Activated T-helper 2 cell treated with anti-CD3 and anti-CD28 coated beads, Interferon-gamma antibody, Interleukin-2, Interleukin-4, amounts not matched to agents 10 μg/mL and 5 μg/mL and 100 μg/mL, durations not matched to agents 14 hours and 24 hours and 36 hours (primary cell): ENCODE measurements at regions of chr14 and their contacts with region 1.

Region 1: DNA sequence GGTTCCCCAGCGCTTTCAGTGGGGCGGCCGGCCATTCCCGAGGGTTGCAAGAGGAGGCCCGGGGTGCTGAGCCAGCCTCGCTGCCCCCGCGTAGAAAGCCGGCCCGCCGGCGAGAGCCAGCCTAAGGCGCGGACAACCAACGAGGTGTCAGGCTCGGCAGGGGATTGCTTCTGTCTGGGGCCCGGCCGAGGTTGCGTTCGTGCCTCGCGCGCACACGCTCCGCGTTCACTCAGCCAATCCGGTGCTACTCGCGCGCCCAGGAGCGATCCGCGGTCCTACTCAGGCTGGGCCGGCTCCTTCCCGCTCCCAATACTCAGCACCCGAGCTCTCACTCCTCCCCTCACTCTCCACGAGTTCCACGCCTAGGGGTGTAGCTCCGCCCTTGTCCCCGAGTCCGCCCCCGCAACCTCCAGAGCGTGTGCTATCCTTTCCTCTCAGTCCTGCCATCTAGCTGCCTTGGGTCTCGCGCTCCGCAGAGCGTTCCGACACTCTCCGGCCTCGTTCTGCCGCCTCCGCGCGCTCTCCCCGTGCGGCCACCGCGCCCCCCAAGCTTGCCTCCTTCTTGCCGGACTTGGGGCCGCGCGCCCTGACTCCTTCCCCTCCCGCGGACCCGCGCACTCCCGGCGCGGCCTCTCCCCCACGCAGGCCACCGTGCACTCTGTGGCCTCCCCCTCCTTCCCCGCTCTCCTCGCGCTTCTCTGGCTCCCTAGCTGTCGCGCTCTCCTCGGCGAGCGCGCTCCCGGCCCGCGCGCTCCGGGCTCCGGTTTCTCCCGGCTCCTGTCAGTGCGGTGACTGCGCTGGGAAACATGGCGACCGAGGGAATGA is at the start of gene GPHN:
- DNase-seq: peak; percentile 90
- H3K4me3 Mint-ChIP-seq: peak within 1 kb of the TSS; percentile 91
- H3K27ac Mint-ChIP-seq: peak within 1 kb of the TSS; percentile 91
- H3K4me1 Mint-ChIP-seq: peaks cover 33% of the 10 kb centered on the region
- H3K27me3 Mint-ChIP-seq: peaks cover 31% of the 10 kb centered on the region
- total RNA-seq, gene GPHN: 33.9 and 34.6 TPM in 2 replicates

Region 2: GRCh38 chr14:66600416-66600815 is 92.5 kb after region 1 on chr14:
- intact Hi-C with region 1: loop called (anchors 5 kb)
- DNase-seq: no peak
- H3K4me3 Mint-ChIP-seq: no peak overlapping the region
- H3K27ac Mint-ChIP-seq: no peak overlapping the region
- H3K4me1 Mint-ChIP-seq: peaks cover 6% of the 10 kb centered on the region
- H3K27me3 Mint-ChIP-seq: no peaks in the 10 kb centered on the region

Region 3: GRCh38 chr14:66716227-66716626 is 208.3 kb after region 1 on chr14:
- intact Hi-C with region 1: loop called (anchors 10 kb)
- DNase-seq: no peak
- H3K4me3 Mint-ChIP-seq: no peak overlapping the region
- H3K27ac Mint-ChIP-seq: no peak overlapping the region
- H3K4me1 Mint-ChIP-seq: peaks cover 38% of the 10 kb centered on the region
- H3K27me3 Mint-ChIP-seq: no peaks in the 10 kb centered on the region

Region 4: GRCh38 chr14:67240978-67241414 is 733.1 kb after region 1 on chr14:
- intact Hi-C with region 1: loop called (anchors 1 kb)
- DNase-seq: peak; percentile 92
- H3K4me3 Mint-ChIP-seq: peak overlapping the region; percentile 85
- H3K27ac Mint-ChIP-seq: peak overlapping the region; percentile 52
- H3K4me1 Mint-ChIP-seq: peaks cover 21% of the 10 kb centered on the region
- H3K27me3 Mint-ChIP-seq: peaks cover 31% of the 10 kb centered on the region